Activated CD4-positive, alpha-beta T cell treated with anti-CD3 and anti-CD28 coated beads for 36 hours (primary cell): ENCODE measurements at regions of chr6 and their contacts with region 1.

Region 1: GRCh38 chr6:32853541-32854375 is at the starts of genes PSMB9 and TAP1:
- DNase-seq: peak; percentile 98
- ATAC-seq: peak; percentile 84
- H3K4me3 Mint-ChIP-seq: peak within 1 kb of the TSS; percentile 100
- H3K27ac Mint-ChIP-seq: peak within 1 kb of the TSS; percentile 99
- H3K4me1 Mint-ChIP-seq: peaks cover 62% of the 10 kb centered on the region
- H3K27me3 Mint-ChIP-seq: no peaks in the 10 kb centered on the region
- total RNA-seq, gene PSMB9: 210 to 282 TPM
- total RNA-seq, gene TAP1: 191 to 255 TPM

Region 2: GRCh38 chr6:32752580-32752979 is 101.2 kb before region 1 on chr6:
- CTCF ChIA-PET with region 1: no interaction called
- POLR2A ChIA-PET with region 1: no interaction called
- intact Hi-C with region 1: no loop called
- DNase-seq: no peak
- ATAC-seq: no peak
- H3K4me3 Mint-ChIP-seq: no peak overlapping the region
- H3K27ac Mint-ChIP-seq: no peak overlapping the region
- H3K4me1 Mint-ChIP-seq: no peaks in the 10 kb centered on the region
- H3K27me3 Mint-ChIP-seq: peaks cover 27% of the 10 kb centered on the region

Region 3: GRCh38 chr6:33417903-33418689 is 564.3 kb after region 1 on chr6 and contains the start of gene CUTA:
- CTCF ChIA-PET with region 1: no interaction called
- POLR2A ChIA-PET with region 1: no interaction called
- intact Hi-C with region 1: loop called (anchors 5 kb)
- DNase-seq: peak; percentile 100
- ATAC-seq: peak; percentile 87
- H3K4me3 Mint-ChIP-seq: peak within 1 kb of the TSS; percentile 96
- H3K27ac Mint-ChIP-seq: peak within 1 kb of the TSS; percentile 98
- H3K4me1 Mint-ChIP-seq: peaks cover 54% of the 10 kb centered on the region
- H3K27me3 Mint-ChIP-seq: no peaks in the 10 kb centered on the region
- total RNA-seq, gene CUTA: 154 to 188 TPM